ENCODE measurements at regions of chr1 and their contacts with region 1.

Region 1: GRCh38 chr1:65687428-65688214 is 105.1 kb upstream of the PDE4B start:
- DNase-seq: peak; percentile 87 to 90 (median 90)
- ATAC-seq: peak; percentile 98 to 99 (median 98)
- H3K4me3 ChIP-seq: no peak overlapping the region
- H3K27ac ChIP-seq: no peak overlapping the region
- H3K4me1 ChIP-seq: peaks cover 0 to 7% (median 0%) of the 10 kb centered on the region in 4 donors
- H3K27me3 ChIP-seq: no peaks in the 10 kb centered on the region
- CTCF ChIP-seq: peak; percentile 98 to 99 (median 98)
- POLR2A ChIP-seq: no peak

Region 2: DNA sequence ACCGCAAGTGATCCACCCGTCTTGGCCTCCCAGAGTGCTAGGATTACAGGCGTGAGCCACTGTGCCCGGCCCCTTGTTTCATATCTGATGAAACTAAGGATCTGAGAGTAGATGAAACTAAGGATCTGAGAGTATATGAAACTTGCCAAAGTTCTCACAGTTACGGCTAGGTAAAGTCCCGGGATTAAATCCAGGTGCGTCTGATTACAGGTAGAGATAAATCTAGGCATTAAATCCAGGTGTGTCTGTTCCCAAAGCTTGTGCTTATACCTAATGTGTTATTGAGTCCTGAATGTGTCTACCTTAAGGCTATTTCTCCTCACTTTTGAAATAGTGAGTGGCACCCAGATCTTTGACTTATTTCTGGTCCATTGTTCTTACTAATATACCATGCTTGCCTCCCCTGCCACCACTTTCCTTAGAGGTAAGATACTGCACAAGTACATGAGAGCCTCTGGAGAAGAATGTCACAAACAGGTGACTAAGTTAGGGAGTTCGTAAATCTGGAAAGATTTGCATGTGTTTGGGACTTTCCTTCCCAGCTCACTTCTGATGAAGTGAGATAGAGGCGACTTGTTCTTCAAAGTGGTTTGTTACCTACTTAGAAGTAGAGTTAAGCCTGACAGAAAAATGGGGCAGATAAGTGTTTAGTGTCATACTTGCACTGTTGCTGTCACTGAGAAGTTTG is 473.1 kb before region 1 on chr1:
- intact Hi-C with region 1: loop called in 1 of 2 experiments (anchors 5 kb)
- DNase-seq: no peak
- ATAC-seq: no peak
- H3K4me3 ChIP-seq: no peak overlapping the region
- H3K27ac ChIP-seq: no peak overlapping the region
- H3K4me1 ChIP-seq: peaks cover 0 to 4% (median 0%) of the 10 kb centered on the region in 4 donors
- H3K27me3 ChIP-seq: no peaks in the 10 kb centered on the region
- CTCF ChIP-seq: no peak
- POLR2A ChIP-seq: no peak

Region 3: DNA sequence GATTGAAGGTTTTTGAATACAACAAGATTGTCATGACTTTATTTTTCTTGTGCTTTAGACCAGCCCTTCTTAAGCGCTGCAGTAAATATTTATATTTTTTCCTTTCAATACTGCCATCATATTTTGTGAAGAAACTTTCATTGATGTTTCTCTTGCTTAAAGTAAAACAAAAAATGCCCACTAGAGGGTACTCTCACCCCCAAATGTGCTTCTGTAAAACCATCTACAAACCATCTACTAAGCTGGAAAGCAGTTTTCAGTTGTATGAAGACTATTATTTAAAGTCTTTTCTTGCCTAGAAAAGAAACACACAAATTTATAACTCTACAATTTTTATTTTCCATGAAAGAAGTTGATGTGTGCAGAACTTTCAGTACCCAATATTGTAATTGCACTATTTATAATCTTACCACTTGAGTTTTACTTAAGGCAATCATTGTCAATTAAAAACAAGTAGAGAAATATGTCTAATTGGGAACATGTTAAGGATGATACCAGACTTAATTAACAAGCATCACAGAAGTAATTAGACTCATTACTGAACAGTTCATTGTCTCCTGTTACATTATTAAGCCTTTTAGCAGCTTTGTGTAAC is 256.4 kb before region 1 on chr1:
- intact Hi-C with region 1: loop called in 1 of 2 experiments (anchors 10 kb)
- DNase-seq: no peak
- ATAC-seq: peak; percentile 65 to 78 (median 74)
- H3K4me3 ChIP-seq: no peak overlapping the region
- H3K27ac ChIP-seq: no peak overlapping the region
- H3K4me1 ChIP-seq: no peaks in the 10 kb centered on the region
- H3K27me3 ChIP-seq: no peaks in the 10 kb centered on the region
- CTCF ChIP-seq: peak; percentile 57 to 75 (median 69)
- POLR2A ChIP-seq: no peak